ENCODE measurements at regions of chr14 and their contacts with region 1.

Region 1: DNA sequence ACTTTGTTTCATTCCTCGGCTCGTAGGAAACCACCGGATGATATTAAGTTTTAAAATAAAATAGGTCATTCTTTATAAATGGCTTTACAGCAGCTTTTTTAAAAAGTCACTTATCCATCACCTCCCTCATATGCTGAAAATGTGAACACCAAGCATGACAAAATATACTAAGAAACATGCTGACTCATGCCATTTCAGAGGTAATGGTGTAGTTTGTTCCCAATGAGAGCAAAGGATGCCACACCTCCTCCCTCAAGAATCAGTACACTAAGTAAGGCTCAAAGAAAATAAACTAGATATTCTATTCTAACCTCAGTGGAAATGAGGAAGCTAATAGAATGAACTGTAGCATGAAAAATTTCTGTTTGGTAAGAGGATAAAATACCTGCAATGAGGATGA is 5.5 kb upstream of the DIO2 start:
- DNase-seq: no peak
- ATAC-seq: peak; percentile 39

Region 2: GRCh38 chr14:80239631-80240030 is 22.8 kb after region 1 on chr14:
- intact Hi-C with region 1: loop called (anchors 1 kb)
- DNase-seq: no peak
- ATAC-seq: no peak

Region 3: DNA sequence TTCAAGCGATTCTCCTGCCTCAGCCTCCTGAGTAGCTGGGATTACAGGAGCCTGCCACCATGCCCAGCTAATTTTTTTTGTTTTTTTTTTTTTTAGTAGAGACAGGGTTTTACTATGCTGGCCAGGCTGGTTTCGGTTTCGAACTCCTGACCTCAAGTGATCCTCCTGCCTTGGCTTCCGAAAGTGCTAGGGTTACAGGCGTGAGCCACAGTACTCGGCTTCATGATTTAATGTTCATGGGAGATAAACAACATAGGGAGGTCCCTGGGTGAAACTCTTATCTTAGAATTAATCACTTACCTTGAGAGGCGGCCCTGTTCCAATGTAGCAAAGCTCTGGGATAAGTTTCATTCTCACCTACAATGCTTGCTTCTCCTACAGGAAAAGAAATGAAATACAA is 1268.6 kb after region 1 on chr14:
- intact Hi-C with region 1: no loop called
- DNase-seq: no peak
- ATAC-seq: no peak